ENCODE measurements at regions of chr17 and their contacts with region 1.

Region 1: GRCh38 chr17:1055751-1056645 is 59.1 kb downstream of the TIMM22 start:
- DNase-seq: peak; percentile 57 to 77 (median 73)
- H3K4me3 ChIP-seq: no peak overlapping the region
- H3K27ac ChIP-seq: peak overlapping the region in 1 of 2 donors; percentile 3
- H3K4me1 ChIP-seq: no peaks in the 10 kb centered on the region
- H3K27me3 ChIP-seq: no peaks in the 10 kb centered on the region
- CTCF ChIP-seq: peak; percentile 67 to 79 (median 76)
- EP300 ChIP-seq: no peak
- POLR2A ChIP-seq: no peak

Region 2: DNA sequence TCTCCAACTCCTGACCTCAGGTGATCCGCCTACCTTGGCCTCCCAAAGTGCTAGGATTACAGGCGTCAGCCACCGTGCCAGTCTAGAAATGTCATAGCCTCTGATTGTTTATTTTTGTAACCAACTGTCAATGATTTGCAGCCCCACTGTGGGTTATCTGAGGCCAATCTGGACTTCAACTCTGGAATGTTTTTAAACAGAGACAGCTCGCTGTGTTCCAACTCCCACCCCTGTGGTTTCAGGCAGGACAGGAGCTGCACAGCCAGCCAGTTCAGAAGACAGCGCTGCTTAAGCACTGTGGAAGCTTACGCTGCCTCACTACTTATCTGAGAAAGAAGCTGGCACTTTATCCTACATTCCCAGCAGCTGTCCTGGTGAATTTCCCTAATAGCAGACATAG is 254.3 kb before region 1 on chr17:
- intact Hi-C with region 1: loop called in 1 of 4 experiments (anchors 10 kb)
- DNase-seq: no peak
- H3K4me3 ChIP-seq: no peak overlapping the region
- H3K27ac ChIP-seq: no peak overlapping the region
- H3K4me1 ChIP-seq: no peaks in the 10 kb centered on the region
- H3K27me3 ChIP-seq: no peaks in the 10 kb centered on the region
- CTCF ChIP-seq: no peak
- EP300 ChIP-seq: no peak
- POLR2A ChIP-seq: no peak

Region 3: GRCh38 chr17:996554-997344 is 59.2 kb before region 1 on chr17 and contains the start of gene TIMM22:
- intact Hi-C with region 1: loop called in 2 of 4 experiments (anchors 5 kb)
- DNase-seq: peak; percentile 87 to 94 (median 92)
- H3K4me3 ChIP-seq: peak within 1 kb of the TSS; percentile 99
- H3K27ac ChIP-seq: peak within 1 kb of the TSS; percentile 83 to 95
- H3K4me1 ChIP-seq: peaks cover 10% of the 10 kb centered on the region
- H3K27me3 ChIP-seq: no peaks in the 10 kb centered on the region
- CTCF ChIP-seq: peak; percentile 66 to 95 (median 90)
- EP300 ChIP-seq: no peak
- POLR2A ChIP-seq: peak; percentile 78
- total RNA-seq, gene TIMM22: 7.9 to 15.1 (median 11.3) TPM

Measured in ovary (tissue), 10 donors.